Right ventricle myocardium inferior (tissue), 1 donor: ENCODE measurements at regions of chr5 and their contacts with region 1.

Region 1: DNA sequence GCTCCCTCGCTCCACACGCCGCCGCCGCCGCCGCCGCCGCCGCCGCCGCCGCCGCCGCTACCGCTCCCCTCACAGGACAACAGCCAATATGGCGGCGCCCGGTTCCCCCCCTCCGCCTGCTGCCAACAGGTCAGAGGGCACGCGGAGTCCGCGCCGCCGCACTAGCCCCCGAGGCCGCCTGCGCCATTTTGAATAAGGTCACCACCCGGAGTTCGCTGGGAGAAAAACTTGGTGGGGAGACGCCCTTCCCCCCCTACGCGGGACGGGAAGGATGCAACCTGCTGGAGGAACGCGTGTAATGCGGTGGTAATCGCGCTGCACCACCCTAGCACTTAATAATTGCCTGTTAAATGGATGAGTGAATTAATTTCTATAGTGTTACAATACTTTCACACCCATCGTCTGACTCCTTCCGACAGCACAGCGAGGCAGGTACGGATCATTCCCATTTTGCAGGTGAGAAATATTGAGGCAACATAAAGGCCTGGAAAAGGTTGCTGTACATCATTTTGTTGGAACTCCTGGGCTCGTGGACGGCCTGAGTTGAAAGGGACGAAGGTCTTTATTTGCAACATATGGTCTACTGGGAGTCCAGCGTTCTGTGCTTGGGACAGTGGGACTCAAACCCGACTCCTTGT is at the start of gene FAM193B:
- DNase-seq: peak; percentile 97
- ATAC-seq: peak; percentile 96
- total RNA-seq, gene FAM193B: 29.5 TPM

Region 2: GRCh38 chr5:176337913-176338312 is 1216.7 kb before region 1 on chr5:
- intact Hi-C with region 1: no loop called
- DNase-seq: no peak
- ATAC-seq: no peak

Region 3: DNA sequence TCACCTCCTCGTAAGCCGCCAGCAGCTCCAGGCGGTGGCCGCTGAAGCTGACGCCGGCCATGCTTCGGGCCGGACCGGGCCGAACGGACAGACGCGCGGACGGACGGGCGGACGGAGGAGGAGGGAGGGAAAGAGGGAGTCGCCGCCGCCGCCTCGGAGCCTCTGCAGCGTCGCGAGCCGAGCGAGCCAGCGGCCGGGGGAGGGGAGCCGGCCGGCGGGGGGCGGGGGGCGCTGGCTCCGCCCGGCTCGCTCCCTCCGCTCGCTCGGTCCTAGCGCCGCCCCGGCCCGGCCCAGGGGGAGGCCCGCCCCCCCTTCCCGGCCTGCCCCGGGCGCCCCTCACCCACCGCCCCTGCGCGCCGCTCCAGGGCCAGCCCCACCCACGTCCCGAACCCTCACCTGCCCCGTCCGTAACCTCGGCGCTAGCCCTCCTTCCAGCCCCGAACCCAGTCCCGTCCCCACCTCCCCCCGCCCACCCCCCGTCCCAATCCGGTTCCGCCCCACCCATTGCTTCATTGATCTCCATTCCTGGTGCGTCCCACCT is 81.1 kb before region 1 on chr5 and contains the start of gene DBN1:
- intact Hi-C with region 1: no loop called
- DNase-seq: no peak
- ATAC-seq: peak; percentile 34
- total RNA-seq, gene DBN1: 32.2 TPM

Region 4: DNA sequence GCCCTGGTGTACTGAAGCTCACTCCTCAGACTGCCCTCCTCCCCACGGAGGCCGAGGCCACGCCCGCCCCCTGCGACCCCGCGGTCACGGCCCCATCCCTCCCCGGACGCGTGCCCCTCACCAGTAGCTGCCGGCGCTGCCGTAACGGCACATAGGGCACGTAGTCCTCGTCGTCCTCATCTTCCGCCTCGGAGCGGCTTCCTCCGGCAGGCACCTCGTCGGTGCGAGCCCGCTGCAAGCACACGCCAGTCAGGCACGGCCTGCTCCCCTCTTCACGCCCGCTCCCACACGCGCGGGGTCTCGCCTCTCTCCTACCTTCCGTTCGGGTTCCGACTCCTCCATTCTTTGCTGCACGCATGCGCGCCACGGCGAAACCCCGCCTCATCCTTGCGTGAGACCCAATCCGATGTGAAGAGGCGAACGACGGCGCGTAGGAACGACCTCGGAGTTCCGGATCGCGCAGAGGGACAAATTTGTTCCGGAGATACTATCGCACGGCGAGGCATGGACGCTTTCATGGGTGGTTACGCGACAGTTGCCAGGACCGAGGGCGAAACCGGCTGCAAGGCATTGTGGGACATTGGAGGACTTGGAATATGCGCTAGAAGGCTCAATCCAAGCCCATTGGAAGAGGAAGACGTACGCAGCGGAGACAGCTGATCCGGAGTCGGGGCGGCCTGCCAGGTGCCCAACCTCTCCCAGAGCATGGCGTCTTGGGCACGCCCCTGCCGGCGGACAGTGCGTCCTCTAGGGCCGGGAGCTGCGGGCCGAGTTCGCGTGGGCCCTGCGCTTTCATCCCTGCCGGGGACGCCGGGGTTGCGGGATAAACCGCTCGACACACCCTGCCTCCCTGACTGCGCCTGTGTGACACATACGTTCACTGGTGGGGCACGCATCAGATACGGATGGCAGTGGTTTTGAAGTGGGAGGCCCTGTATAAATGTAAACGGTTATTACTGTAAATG is 37.7 kb before region 1 on chr5 and contains the start of gene DDX41:
- intact Hi-C with region 1: loop called (anchors 2 kb)
- DNase-seq: peak; percentile 98
- ATAC-seq: peak; percentile 95
- total RNA-seq, gene DDX41: 30.1 TPM

Region 5: GRCh38 chr5:177592010-177592834 is 37.6 kb after region 1 on chr5 and contains the start of gene TMED9:
- intact Hi-C with region 1: loop called (anchors 5 kb)
- DNase-seq: peak; percentile 94
- ATAC-seq: peak; percentile 97
- total RNA-seq, gene TMED9: 75.3 TPM